Dorsolateral prefrontal cortex (tissue), 120 donors: ENCODE measurements at regions of chr18 and their contacts with region 1.

Region 1: DNA sequence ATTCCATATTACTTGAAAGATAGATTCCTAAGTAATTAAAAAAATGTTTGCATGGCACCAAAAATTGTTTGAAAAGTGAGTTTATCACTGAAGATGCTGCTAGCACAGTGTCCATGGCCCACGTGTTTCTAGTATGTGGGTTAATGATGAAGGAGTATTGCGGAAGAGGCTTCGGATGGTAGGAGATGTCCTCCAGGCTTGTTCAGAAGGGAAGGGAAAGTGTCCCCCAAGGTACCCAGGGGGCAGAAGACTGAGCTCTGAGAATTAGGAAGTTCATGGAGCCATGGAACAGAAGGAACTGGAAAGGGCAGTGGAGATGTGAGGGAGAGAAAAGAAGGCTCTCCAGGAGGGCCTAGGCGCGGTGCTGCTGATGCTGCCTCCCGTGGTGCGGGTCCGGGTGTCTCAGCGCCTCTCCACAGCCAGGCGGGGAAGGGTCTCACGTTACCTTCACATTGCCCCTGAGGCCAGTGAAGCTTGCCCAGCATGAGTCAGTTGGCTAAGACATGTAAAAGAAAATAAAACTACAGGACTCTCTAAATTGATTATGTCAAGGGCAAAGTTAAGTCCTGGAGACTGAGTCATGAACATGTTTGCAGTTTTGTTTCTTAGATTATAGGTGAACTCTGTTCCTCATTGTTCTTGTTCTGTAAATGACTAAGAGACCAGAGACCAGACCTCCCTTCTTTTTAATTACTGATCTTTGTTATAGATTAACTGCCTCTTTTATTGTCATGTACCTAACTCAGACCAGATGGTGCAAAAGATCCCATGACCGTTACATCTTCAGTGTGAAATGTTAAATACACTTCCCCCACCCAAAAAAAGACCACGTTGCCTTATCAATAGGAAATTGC is 89.0 kb downstream of the MTCL1 start:
- DNase-seq: no peak
- H3K4me3 ChIP-seq: no peak overlapping the region
- H3K27ac ChIP-seq: peak overlapping the region in 1 of 59 donors; percentile 72
- H3K27me3 ChIP-seq: no peaks in the 10 kb centered on the region
- CTCF ChIP-seq: no peak

Region 2: DNA sequence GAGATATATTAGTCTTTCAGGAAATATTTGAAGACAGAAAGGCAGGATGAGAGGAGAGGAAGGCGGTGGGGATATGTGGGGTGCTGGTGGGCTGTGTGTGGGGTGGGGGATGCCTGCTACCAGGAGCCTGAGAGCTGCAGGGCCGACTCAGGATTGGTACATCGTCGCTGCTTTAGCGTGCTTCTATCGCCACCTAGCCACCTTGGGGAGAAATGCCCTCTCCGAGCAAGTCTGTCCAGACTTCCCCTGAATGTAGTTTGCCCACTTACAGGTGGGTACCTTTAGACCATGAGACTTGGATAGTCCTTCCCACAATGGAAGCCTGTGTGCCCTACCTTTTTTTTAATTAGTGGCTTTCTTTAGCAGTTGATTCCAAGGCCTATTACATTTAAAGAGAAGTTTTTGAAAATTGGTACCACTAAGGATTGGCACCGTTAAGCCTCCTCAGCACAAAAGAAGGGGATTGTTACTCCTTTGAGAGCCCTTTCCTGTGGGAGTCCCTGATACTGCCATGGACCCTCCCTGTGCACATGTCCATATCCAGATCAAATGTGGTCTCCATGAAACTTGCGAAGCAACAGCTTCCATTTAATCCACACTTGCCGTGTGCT is 194.0 kb after region 1 on chr18:
- intact Hi-C with region 1: loop called in 1 of 2 experiments (anchors 10 kb)
- DNase-seq: peak; percentile 39 to 83 (median 72)
- H3K4me3 ChIP-seq: no peak overlapping the region
- H3K27ac ChIP-seq: peak overlapping the region in 1 of 59 donors; percentile 76
- H3K27me3 ChIP-seq: no peaks in the 10 kb centered on the region
- CTCF ChIP-seq: peak; percentile 27 to 91 (median 77)